Sciatic nerve (tissue), 2 donors: ENCODE measurements at regions of chr1 and their contacts with region 1.

Region 1: GRCh38 chr1:19704247-19705113 is 39.8 kb downstream of the HTR6 start:
- DNase-seq: peak; percentile 86
- ATAC-seq: peak; percentile 91

Region 2: DNA sequence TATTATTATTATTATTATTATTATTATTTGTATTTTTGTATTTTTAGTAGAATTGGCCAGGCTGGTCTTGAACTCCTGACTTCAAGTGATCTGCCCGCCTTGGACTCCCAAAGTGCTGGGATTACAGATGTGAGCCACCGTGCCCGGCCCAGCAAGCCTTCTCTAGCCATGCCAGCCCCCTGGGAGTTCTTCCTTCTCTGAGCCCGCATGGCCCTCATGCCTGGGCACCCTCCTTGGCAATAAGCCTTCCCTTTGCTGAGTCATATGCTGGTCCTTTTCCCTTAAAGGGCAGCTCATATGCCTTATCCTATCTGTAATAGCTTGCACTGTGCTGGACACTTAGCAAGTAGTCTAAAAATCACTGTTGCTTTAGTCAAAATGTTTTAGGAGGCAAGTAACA is 68.8 kb before region 1 on chr1:
- intact Hi-C with region 1: no loop called
- DNase-seq: no peak
- ATAC-seq: no peak

Region 3: GRCh38 chr1:19675797-19676196 is 28.7 kb before region 1 on chr1:
- intact Hi-C with region 1: loop called (anchors 1 kb)
- DNase-seq: no peak
- ATAC-seq: no peak